ENCODE measurements at regions of chr9 and their contacts with region 1.

Region 1: GRCh38 chr9:128656416-128657343 is at the start of gene DYNC2I2:
- DNase-seq: peak; percentile 92 to 99 (median 95)

Region 2: DNA sequence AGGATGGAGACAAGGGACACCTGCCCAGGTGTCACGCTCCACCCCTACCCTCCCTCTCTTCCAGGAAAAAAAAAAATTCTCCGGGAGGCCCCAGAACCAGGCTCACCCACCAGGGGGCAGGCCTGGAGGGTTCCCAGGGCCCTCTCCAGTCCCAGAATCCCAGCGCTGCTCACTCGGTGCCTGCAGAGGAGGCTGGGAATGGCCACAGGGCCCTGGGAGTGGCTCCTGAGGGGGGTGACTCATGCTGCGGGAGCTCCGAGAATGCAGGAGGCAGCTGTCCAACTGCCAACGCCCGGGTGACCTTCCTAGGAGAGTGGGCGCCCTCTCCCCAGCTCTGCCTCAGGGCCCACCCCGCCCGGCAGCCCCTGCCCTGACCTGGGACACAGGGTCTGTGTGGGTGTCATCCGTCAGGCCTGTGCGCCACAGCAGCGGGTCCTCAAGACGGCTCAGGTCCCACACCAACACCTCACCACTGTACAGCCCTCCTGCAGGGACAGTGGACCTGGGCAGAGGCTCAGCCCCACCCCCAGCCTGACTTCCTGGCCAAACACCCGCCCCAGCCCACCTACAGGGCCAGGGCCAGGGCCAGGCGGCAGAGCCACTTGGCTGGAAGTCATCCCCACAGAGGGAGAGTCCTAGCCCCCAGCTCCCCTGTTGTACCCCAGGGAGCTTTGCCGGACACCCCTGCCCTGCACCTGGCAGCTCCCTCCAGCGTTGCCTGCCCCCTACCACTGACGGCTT is 21.2 kb before region 1 on chr9:
- intact Hi-C with region 1: loop called (anchors 2 kb)
- DNase-seq: peak in 7 of 10 donors; percentile 45 to 93 (median 62)

Region 3: GRCh38 chr9:128688512-128689292 is 32.0 kb after region 1 on chr9 and contains the start of gene SET:
- intact Hi-C with region 1: loop called (anchors 2 kb)
- DNase-seq: peak; percentile 77 to 98 (median 86)